Dorsolateral prefrontal cortex (tissue), 120 donors: ENCODE measurements at regions of chr19 and their contacts with region 1.

Region 1: DNA sequence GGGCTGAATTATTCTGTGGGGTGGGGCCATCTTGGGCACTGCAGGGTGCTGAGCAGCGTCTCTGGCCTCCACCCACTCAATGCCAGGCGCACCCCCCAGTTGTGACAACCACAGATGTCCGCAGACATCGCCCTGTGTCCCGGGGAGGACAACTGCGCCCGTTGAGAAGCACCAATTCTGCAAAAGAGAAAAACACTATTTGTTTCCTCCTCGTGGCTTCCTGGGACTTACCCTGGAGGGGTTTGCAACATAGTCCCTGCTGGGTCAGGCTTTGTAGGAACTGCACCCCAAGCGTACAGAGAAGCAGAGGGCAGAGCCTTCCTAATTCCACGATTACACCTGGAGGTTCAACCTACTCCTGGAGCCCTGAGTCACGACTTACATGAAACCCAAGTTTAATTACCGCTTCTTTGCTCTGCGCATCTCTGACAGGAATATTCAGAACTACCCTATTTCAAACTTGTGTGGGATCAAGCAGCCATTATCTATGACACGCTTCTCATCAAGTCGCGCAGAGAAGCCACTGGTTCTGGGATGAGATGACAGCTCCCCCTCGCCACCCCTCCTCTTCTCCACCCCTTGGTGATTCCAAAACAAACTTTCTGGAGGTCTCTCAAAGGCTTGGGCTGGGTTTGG is 11.1 kb upstream of the SLC39A3 start:
- DNase-seq: no peak
- H3K4me3 ChIP-seq: no peak overlapping the region
- H3K27ac ChIP-seq: peak overlapping the region in 54 of 59 donors; percentile 7 to 85 (median 66)
- H3K27me3 ChIP-seq: no peaks in the 10 kb centered on the region
- CTCF ChIP-seq: no peak

Region 2: GRCh38 chr19:2663920-2664571 is 86.9 kb before region 1 on chr19:
- intact Hi-C with region 1: loop called in 1 of 2 experiments (anchors 5 kb)
- DNase-seq: peak in 9 of 10 donors; percentile 36 to 87 (median 69)
- H3K4me3 ChIP-seq: peak overlapping the region in 2 of 59 donors; percentile 8 to 25
- H3K27ac ChIP-seq: peak overlapping the region; percentile 21 to 93 (median 86)
- H3K27me3 ChIP-seq: no peaks in the 10 kb centered on the region
- CTCF ChIP-seq: peak in 39 of 56 donors; percentile 9 to 60 (median 32)